Right ventricle myocardium superior (tissue), 1 donor: ENCODE measurements at regions of chr12 and their contacts with region 1.

Region 1: DNA sequence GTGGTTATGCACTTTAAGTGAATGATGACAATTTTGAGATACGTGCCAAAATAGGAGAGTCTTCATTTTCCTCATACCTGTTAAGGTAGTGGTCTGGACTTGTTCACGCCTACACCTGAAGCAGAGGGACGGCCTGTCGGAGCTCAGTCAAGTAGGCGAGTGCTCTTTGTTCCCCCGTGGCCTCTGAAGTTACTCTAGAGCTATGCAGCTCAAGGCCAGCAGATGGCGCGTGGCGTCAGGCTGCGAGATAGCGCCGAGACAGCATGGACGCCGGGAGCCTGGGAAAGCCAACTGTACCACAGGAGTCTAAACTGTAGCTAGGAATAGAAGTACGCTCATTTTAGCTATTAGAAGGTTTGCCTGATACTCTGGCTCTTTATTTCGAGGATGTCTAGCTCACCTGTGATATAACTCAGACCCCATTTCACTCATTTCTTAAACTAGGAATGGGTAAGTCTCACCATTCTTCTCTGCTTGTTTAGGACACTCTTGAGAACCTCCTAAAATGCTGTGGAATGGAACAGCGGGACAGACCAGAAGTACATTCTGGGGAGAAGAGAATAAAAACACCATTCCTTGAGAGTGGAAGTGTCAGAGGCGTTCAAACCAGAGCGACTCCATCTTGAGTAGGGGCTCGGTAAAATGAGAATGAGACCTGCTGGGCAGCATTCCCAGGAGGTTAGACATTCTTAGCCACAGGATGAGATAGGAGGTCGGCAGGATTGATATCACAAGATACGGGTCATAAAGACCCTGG is 267.4 kb upstream of the HMGA2 start:
- DNase-seq: peak; percentile 88
- ATAC-seq: peak; percentile 99

Region 2: GRCh38 chr12:65673732-65674131 is 116.9 kb after region 1 on chr12:
- intact Hi-C with region 1: loop called (anchors 10 kb)
- DNase-seq: no peak
- ATAC-seq: no peak

Region 3: GRCh38 chr12:66087365-66087943 is 530.6 kb after region 1 on chr12:
- intact Hi-C with region 1: loop called (anchors 5 kb)
- DNase-seq: peak; percentile 53
- ATAC-seq: peak; percentile 71